ENCODE measurements at regions of chr9 and their contacts with region 1.

Region 1: GRCh38 chr9:33466565-33467495 is 6.9 kb downstream of the NOL6 start:
- DNase-seq: peak in 34 of 35 experiments; percentile 25 to 83 (median 62)
- ATAC-seq: peak; percentile 63 to 81 (median 71)
- H3K4me3 ChIP-seq: no peak overlapping the region
- H3K4me3 Mint-ChIP-seq: no peak overlapping the region
- H3K27ac ChIP-seq: no peak overlapping the region
- H3K27ac Mint-ChIP-seq: peak overlapping the region in 1 of 2 donors; percentile 44
- H3K4me1 ChIP-seq: peaks cover 0 to 2% of the 10 kb centered on the region in 2 experiments
- H3K4me1 Mint-ChIP-seq: peaks cover 7 to 16% (median 16%) of the 10 kb centered on the region in 3 donors
- H3K27me3 ChIP-seq: no peaks in the 10 kb centered on the region
- H3K27me3 Mint-ChIP-seq: no peaks in the 10 kb centered on the region

Region 2: GRCh38 chr9:33374634-33375213 is 92.1 kb before region 1 on chr9:
- CTCF ChIA-PET with region 1: interaction called, 13 to 33 read pairs
- POLR2A ChIA-PET with region 1: no interaction called
- DNase-seq: peak; percentile 35 to 79 (median 62)
- ATAC-seq: peak; percentile 81 to 94 (median 88)
- H3K4me3 ChIP-seq: peak overlapping the region in 1 of 2 donors; percentile 2
- H3K4me3 Mint-ChIP-seq: peak overlapping the region; percentile 25 to 43 (median 32)
- H3K27ac ChIP-seq: no peak overlapping the region
- H3K27ac Mint-ChIP-seq: peak overlapping the region; percentile 64 to 72
- H3K4me1 ChIP-seq: peaks cover 0 to 9% of the 10 kb centered on the region in 2 experiments
- H3K4me1 Mint-ChIP-seq: peaks cover 10 to 14% (median 11%) of the 10 kb centered on the region in 3 donors
- H3K27me3 ChIP-seq: no peaks in the 10 kb centered on the region
- H3K27me3 Mint-ChIP-seq: no peaks in the 10 kb centered on the region

Region 3: GRCh38 chr9:33404788-33405362 is 62.0 kb before region 1 on chr9:
- CTCF ChIA-PET with region 1: interaction called, 11 to 27 read pairs
- POLR2A ChIA-PET with region 1: no interaction called
- DNase-seq: no peak
- ATAC-seq: no peak
- H3K4me3 ChIP-seq: no peak overlapping the region
- H3K4me3 Mint-ChIP-seq: no peak overlapping the region
- H3K27ac ChIP-seq: no peak overlapping the region
- H3K27ac Mint-ChIP-seq: peak overlapping the region; percentile 20 to 68
- H3K4me1 ChIP-seq: peaks cover 0 to 7% of the 10 kb centered on the region in 2 experiments
- H3K4me1 Mint-ChIP-seq: peaks cover 6 to 7% (median 6%) of the 10 kb centered on the region in 3 donors
- H3K27me3 ChIP-seq: no peaks in the 10 kb centered on the region
- H3K27me3 Mint-ChIP-seq: peaks cover 0 to 1% of the 10 kb centered on the region in 2 donors

Region 4: DNA sequence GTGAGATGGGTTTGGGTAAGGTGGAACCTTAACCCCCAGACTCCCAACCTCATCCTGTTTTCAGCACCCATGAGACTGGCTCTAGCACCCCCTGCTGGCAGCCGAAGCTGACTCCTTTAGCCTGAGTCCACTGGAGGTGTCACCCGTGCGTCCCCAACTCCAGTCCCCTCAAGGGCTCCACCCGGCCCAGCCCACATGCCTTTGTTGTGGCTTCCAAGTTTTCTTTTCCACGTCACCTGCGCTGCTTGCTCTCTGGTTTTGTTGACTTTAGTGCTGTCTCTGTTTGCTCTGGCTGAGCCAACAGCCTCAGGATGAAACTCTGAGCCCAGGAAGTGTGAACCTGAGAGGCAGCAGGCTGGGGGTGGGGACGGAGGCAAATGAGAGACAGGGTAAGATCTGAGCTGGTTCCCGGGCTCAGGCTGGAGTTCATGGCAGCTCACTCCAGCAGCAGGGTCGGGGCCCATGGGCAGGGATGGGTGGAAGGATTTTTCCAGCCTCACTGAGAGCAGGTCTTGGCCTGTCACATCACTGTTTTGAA is 51.3 kb before region 1 on chr9:
- CTCF ChIA-PET with region 1: interaction called, 5 to 13 read pairs
- POLR2A ChIA-PET with region 1: no interaction called
- DNase-seq: peak; percentile 84 to 98 (median 95)
- ATAC-seq: peak; percentile 83 to 94 (median 85)
- H3K4me3 ChIP-seq: peak overlapping the region; percentile 10 to 35
- H3K4me3 Mint-ChIP-seq: peak overlapping the region; percentile 63 to 70 (median 70)
- H3K27ac ChIP-seq: peak overlapping the region; percentile 83
- H3K27ac Mint-ChIP-seq: peak overlapping the region; percentile 99 to 100
- H3K4me1 ChIP-seq: peaks cover 30 to 55% of the 10 kb centered on the region in 2 experiments
- H3K4me1 Mint-ChIP-seq: peaks cover 54 to 59% (median 55%) of the 10 kb centered on the region in 3 donors
- H3K27me3 ChIP-seq: no peaks in the 10 kb centered on the region
- H3K27me3 Mint-ChIP-seq: no peaks in the 10 kb centered on the region

Region 5: DNA sequence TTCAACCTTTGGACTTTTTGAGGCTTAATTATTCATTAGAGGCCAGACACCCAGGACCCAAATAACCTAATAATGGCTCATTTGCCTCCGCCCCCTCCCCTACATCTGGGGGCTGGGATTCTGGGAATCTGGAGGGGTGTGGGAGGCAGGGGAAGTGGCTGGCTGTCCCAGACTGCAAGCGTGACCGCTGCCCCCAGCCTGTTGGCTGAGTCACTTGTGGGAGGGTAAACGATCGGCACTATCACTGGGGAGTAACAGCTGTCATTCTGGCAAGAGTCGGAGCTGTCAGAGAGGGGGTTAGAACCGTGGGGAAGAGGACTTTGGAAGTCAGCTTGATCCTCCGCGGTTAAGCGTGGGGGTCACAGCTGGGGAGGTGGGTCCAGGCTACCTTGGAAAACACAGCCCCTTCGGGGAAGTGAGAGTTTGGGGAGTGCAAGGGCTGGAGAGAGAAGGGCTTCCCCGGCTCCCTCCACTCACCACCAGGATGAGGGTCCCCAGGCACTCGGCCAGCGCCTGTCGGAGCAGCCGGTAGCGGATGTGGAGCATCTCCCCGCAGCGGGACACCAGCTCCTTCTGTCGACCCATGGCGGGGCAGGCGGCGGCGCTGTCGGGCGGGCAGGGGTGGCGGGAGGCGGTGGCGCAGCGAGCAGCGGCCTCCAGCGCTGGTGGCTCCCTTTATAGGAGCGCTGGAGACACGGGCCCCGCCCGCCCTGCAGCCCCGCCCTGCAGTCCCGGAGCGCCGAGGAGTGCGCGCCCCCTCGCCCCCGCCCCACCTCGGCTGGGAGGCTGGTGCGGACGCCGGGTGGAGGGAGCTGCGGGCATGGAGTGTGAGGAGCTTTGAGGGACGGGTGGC is 19.7 kb before region 1 on chr9 and contains the start of gene AQP3:
- CTCF ChIA-PET with region 1: interaction called, 9 to 12 read pairs
- POLR2A ChIA-PET with region 1: interaction called in 1 of 2 experiments, 3 read pairs
- DNase-seq: peak; percentile 36 to 85 (median 68)
- ATAC-seq: peak; percentile 67 to 74 (median 73)
- H3K4me3 ChIP-seq: peak within 1 kb of the TSS; percentile 77 to 83
- H3K4me3 Mint-ChIP-seq: peak within 1 kb of the TSS; percentile 94 to 98 (median 94)
- H3K27ac ChIP-seq: peak within 1 kb of the TSS; percentile 71
- H3K27ac Mint-ChIP-seq: peak within 1 kb of the TSS; percentile 95 to 98
- H3K4me1 ChIP-seq: peaks cover 19 to 67% of the 10 kb centered on the region in 2 experiments
- H3K4me1 Mint-ChIP-seq: peaks cover 50 to 64% (median 64%) of the 10 kb centered on the region in 3 donors
- H3K27me3 ChIP-seq: no peaks in the 10 kb centered on the region
- H3K27me3 Mint-ChIP-seq: no peaks in the 10 kb centered on the region
- total RNA-seq, gene AQP3: 85.7 to 130 (median 111) TPM

Region 6: DNA sequence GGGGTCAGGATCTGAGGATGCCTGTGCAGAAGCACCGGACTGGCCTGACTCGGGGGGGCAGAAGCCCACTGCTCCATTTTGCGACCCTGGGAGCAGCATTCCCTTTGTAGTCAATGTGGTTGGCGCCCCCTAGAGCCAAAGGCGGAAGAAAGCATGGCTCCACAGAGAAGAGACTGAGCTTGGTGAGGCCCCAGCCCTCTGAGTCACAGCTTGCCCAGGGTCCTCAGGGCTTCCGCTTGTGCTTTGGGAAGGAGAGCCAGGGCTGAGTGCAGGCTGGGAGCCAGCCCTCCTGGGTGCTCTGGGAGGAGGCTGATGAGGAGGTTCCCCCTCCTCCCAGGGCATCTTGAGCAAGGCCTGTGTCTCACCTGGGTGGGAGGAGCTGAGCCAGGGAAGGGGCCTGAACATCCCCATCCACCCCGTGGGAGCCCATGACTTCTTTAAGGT is 14.0 kb before region 1 on chr9:
- CTCF ChIA-PET with region 1: interaction called, 9 to 12 read pairs
- POLR2A ChIA-PET with region 1: no interaction called
- DNase-seq: peak in 22 of 35 experiments; percentile 9 to 63 (median 30)
- ATAC-seq: peak; percentile 61 to 76 (median 68)
- H3K4me3 ChIP-seq: no peak overlapping the region
- H3K4me3 Mint-ChIP-seq: peak overlapping the region in 2 of 3 donors; percentile 3 to 75
- H3K27ac ChIP-seq: peak overlapping the region; percentile 5
- H3K27ac Mint-ChIP-seq: peak overlapping the region; percentile 89 to 90
- H3K4me1 ChIP-seq: peaks cover 27 to 68% of the 10 kb centered on the region in 2 experiments
- H3K4me1 Mint-ChIP-seq: peaks cover 62 to 71% (median 71%) of the 10 kb centered on the region in 3 donors
- H3K27me3 ChIP-seq: no peaks in the 10 kb centered on the region
- H3K27me3 Mint-ChIP-seq: no peaks in the 10 kb centered on the region

Region 7: GRCh38 chr9:33628865-33629410 is 162.1 kb after region 1 on chr9:
- CTCF ChIA-PET with region 1: no interaction called
- POLR2A ChIA-PET with region 1: no interaction called
- DNase-seq: peak in 6 of 35 experiments; percentile 11 to 27 (median 18)
- ATAC-seq: peak in 1 of 4 experiments; percentile 39
- H3K4me3 ChIP-seq: no peak overlapping the region
- H3K4me3 Mint-ChIP-seq: no peak overlapping the region
- H3K27ac ChIP-seq: no peak overlapping the region
- H3K27ac Mint-ChIP-seq: no peak overlapping the region
- H3K4me1 ChIP-seq: peaks cover 0 to 3% of the 10 kb centered on the region in 2 experiments
- H3K4me1 Mint-ChIP-seq: peaks cover 3 to 4% (median 4%) of the 10 kb centered on the region in 3 donors
- H3K27me3 ChIP-seq: peaks cover 0 to 23% of the 10 kb centered on the region in 2 experiments
- H3K27me3 Mint-ChIP-seq: peaks cover 27 to 45% of the 10 kb centered on the region in 2 donors